GM13977 (cell line): ENCODE measurements at regions of chr16 and their contacts with region 1.

Region 1: DNA sequence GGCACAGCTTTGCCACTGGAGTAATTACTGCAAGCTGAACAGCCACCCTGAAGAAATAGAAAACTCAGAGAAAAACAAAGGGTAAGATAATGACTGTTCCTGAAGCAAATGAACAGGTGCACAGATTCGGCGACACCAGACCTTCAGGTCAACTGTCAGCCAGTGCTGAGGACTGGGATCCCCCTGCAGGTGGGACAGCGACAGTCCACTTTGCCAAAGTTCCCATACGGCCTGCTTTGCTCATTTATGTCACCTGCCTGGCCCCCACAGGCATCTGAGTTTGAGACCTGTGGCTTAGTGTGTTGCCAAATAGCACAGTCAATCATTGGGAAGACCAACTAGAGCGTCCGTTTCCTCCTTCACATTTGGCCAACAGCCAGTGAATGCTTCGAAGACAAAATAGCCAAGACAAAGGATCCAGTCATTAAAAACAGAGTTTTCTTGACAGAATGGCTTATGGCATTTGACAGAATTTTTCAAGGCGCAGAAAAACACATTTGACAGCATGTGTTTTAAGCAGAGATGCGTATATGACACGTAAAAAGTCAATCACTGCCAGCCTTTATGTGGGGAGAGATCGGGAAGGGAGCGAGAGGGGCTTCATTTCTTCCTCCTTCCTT is 113.8 kb downstream of the ABCC12 start:
- DNase-seq: no peak
- CTCF ChIP-seq: peak; percentile 5

Region 2: DNA sequence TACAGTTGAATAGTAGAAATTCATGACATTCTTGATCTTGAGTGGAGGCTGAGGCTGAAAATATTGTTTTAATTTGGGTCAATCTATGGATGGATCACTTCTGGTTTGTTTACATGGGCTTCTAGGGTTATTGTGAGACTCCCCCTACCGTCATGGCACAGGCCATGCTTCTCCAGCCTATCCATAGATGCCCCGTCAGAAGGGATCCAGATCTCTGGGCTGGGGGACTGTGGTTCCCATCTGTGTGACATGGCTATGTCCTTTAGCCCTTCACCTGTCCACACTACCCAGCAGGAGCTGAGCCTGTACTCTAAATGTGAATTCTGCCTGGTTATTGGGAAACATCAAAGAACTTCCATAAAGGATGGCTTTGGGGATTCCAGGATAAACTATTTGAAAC is 46.6 kb before region 1 on chr16:
- in situ Hi-C with region 1: loop called (anchors 10 kb)
- DNase-seq: no peak
- CTCF ChIP-seq: peak; percentile 8